Lower leg skin (tissue), 4 donors: ENCODE measurements at regions of chr14 and their contacts with region 1.

Region 1: GRCh38 chr14:101120641-101121507 is 217.4 kb upstream of the RTL1 start:
- DNase-seq: peak; percentile 27 to 87
- H3K4me3 ChIP-seq: no peak overlapping the region
- CTCF ChIP-seq: no peak
- POLR2A ChIP-seq: no peak

Region 2: GRCh38 chr14:100855256-100855875 is 265.5 kb before region 1 on chr14:
- intact Hi-C with region 1: loop called (anchors 5 kb)
- DNase-seq: no peak
- H3K4me3 ChIP-seq: no peak overlapping the region
- CTCF ChIP-seq: no peak
- POLR2A ChIP-seq: no peak

Region 3: GRCh38 chr14:101584055-101584859 is 463.4 kb after region 1 on chr14:
- intact Hi-C with region 1: loop called (anchors 10 kb)
- DNase-seq: peak; percentile 42 to 70
- H3K4me3 ChIP-seq: no peak overlapping the region
- CTCF ChIP-seq: no peak
- POLR2A ChIP-seq: no peak